Adrenal gland (tissue), 19 donors: ENCODE measurements at regions of chr22 and their contacts with region 1.

Region 1: GRCh38 chr22:25564320-25564978 is at the start of gene GRK3:
- DNase-seq: peak; percentile 68 to 89 (median 78)
- H3K4me3 ChIP-seq: peak within 1 kb of the TSS in 3 of 4 donors; percentile 24 to 93 (median 49)
- H3K27ac ChIP-seq: peak within 1 kb of the TSS; percentile 32 to 76 (median 46)
- H3K4me1 ChIP-seq: peaks cover 12 to 18% of the 10 kb centered on the region in 2 donors
- H3K27me3 ChIP-seq: no peaks in the 10 kb centered on the region
- CTCF ChIP-seq: no peak
- POLR2A ChIP-seq: peak; percentile 21 to 31
- total RNA-seq, gene GRK3: 4.6 to 20.9 (median 12.4) TPM

Region 2: DNA sequence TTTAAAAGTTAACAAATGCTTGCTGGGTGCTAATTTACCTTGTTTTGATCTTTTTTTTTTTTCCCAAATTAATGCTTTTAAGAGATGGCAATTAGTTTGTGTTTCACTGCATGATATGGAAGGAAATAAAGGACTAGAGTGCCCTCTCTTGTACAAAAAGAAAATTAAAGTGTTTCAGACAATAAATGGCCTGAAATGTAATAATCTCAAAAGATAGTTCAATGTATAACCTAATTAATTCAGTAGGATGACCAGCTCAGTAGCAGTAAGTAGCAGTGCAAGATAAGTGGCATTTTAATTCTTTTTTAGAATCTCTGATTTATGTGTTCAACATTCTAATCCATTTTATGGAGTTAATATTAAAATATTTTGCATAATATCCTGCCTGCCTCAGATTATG is 137.6 kb after region 1 on chr22:
- intact Hi-C with region 1: loop called in 1 of 2 experiments (anchors 10 kb)
- DNase-seq: no peak
- H3K4me3 ChIP-seq: no peak overlapping the region
- H3K27ac ChIP-seq: no peak overlapping the region
- H3K4me1 ChIP-seq: peaks cover 0 to 12% of the 10 kb centered on the region in 2 donors
- H3K27me3 ChIP-seq: no peaks in the 10 kb centered on the region
- CTCF ChIP-seq: peak; percentile 27 to 75 (median 58)
- POLR2A ChIP-seq: no peak